Vagina (tissue), 2 donors: ENCODE measurements at regions of chr2 and their contacts with region 1.

Region 1: DNA sequence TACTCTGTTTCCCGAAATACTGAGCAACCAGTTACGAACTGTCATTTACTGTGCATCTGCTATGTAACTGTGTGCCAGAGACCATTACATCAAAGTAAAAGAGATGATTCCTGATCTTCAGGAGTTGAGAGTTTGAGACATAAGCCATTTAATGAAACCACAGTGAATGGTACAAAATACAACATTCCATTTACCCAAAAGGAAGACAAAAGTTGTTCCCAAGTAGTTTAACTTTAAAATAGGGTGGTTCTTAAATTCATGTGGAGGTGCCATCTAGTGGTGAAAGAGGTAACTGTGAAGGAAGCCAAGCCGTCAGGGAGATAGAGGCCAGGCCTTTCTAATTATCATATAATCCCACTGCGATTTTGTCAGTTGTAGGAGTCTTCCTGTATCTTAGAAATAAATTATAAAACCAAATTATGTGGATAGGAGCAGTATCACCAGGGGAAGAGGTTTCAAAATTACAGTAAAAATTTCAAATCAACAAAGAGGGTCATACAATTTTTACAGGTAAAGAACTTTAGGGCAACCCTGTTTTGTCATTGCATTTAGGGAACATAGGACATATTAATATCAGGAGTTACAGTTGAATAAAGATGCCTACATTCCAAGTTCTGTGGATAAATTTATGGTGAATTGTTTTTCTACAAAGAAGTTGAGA is 67.7 kb downstream of the EPAS1 start:
- DNase-seq: no peak
- H3K4me3 ChIP-seq: no peak overlapping the region
- H3K27ac ChIP-seq: no peak overlapping the region
- H3K4me1 ChIP-seq: peaks cover 13% of the 10 kb centered on the region
- H3K27me3 ChIP-seq: no peaks in the 10 kb centered on the region
- CTCF ChIP-seq: peak; percentile 50 to 79 (median 55)
- POLR2A ChIP-seq: no peak

Region 2: DNA sequence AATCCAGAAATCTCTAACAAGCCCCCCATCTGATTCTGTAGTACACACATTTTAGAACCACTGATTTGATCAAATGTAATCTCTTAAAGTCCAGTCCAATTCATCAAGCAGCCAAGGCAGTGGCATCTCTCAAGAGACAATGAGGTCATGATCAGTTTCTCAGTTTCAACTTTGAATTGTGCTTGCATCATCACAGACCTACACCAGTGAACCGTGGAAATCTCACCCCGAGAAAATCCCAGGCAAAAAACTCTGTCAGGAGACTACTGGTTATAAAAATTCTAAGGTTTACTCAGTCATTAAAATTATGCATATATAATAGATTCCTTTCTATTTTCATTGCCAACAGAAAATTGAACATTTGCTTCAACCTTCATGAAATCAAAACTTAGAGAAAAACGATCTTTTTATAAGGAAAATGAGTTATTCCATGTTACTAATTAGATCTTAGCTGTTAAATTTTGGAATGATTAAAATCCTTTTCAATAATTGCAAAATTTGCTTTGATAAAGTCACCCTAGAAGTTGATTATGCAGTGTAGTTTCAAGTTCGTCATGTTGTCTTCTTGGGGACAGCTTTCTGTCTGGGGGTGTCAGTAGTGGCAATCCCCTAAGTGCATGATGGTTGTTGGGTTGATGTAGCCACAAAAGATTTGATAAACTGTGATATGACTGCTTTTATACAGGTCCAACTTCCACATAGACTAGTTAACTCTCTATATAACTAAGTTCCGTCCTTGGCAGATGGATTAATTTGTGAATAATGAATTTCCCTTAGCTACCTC is 1768.2 kb before region 1 on chr2:
- intact Hi-C with region 1: no loop called
- DNase-seq: no peak
- H3K4me3 ChIP-seq: no peak overlapping the region
- H3K27ac ChIP-seq: no peak overlapping the region
- H3K4me1 ChIP-seq: no peaks in the 10 kb centered on the region
- H3K27me3 ChIP-seq: no peaks in the 10 kb centered on the region
- CTCF ChIP-seq: no peak
- POLR2A ChIP-seq: no peak

Region 3: DNA sequence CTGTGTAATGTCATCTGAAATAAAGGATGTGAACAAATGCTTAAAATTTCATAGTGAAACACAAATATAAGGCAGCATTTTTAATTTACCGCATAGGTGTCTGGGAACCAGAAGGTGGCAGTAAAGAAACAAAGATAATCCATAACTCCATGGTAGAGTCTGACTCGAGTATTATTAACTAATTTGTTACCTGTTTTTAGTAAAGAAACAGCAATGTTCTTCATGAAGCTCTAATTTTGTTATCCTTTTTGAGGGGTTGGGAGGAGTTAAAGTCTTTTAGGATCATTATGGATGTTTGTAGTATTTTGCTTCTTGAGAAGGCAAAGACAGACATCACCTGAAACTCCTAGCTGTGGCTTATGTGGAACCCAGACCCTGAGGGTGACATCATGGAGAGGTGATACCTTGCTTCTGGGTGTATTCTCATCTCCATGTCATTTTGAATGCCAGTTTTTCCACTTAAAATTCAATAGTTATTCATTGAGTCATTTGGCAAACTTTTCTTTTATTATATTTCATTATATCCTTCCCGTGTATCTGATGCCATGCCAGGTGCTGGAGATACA is 353.9 kb before region 1 on chr2:
- intact Hi-C with region 1: loop called (anchors 5 kb)
- DNase-seq: no peak
- H3K4me3 ChIP-seq: no peak overlapping the region
- H3K27ac ChIP-seq: no peak overlapping the region
- H3K4me1 ChIP-seq: no peaks in the 10 kb centered on the region
- H3K27me3 ChIP-seq: no peaks in the 10 kb centered on the region
- CTCF ChIP-seq: peak; percentile 33 to 56 (median 53)
- POLR2A ChIP-seq: no peak